ENCODE measurements at regions of chr3 and their contacts with region 1.

Region 1: GRCh38 chr3:58299839-58300516 is 6.1 kb upstream of the RPP14 start:
- DNase-seq: peak in 1 of 2 experiments; percentile 39
- H3K4me3 ChIP-seq: no peak overlapping the region
- H3K27ac ChIP-seq: no peak overlapping the region
- H3K4me1 ChIP-seq: no peaks in the 10 kb centered on the region
- H3K27me3 ChIP-seq: no peaks in the 10 kb centered on the region
- CTCF ChIP-seq: peak; percentile 76

Region 2: GRCh38 chr3:57864853-57865252 is 435.1 kb before region 1 on chr3:
- CTCF ChIA-PET with region 1: no interaction called
- POLR2A ChIA-PET with region 1: no interaction called
- intact Hi-C with region 1: loop called (anchors 5 kb)
- DNase-seq: no peak
- H3K4me3 ChIP-seq: no peak overlapping the region
- H3K27ac ChIP-seq: 0 out of 2 replicates have a peak overlapping the region, but pooled peaks have one; percentile 9
- H3K4me1 ChIP-seq: no peaks in the 10 kb centered on the region
- H3K27me3 ChIP-seq: no peaks in the 10 kb centered on the region
- CTCF ChIP-seq: peak; percentile 64

Region 3: DNA sequence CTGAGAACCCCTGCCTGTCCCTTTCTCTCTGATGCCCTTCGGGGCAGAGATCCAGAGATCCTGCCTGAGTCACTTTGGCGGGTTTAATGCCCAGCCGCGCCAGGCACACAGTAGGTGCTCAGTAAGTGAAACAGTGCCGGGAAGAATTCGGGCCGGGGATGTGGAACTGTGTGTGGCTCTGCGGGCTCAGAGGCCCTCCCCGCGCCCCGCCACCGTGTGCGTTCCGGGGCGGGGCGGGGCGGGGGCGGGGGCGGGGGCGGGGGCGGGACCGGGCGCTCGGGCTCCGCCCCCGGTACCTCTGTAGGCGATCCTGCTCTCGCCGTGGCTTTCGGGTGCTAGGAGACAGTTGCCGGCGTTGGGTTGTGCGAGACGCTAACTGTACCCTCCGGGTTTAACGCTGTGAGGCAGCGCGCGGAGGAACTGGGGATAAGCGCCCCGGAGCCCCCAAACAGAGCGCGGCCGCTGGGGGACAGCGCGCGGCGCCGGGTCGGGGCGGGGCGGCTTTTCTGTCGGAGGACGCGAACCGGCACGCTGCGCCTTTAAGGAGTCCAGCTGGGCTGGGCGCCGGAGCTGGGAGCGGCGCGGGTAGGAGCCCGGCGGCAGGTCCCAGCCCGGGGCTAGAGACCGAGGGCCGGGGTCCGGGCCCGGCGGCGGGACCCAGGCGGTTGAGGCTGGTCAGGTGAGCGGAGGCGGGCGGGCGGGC is 62.6 kb before region 1 on chr3 and contains the start of gene ABHD6:
- CTCF ChIA-PET with region 1: no interaction called
- POLR2A ChIA-PET with region 1: no interaction called
- intact Hi-C with region 1: loop called (anchors 5 kb)
- DNase-seq: peak; percentile 39 to 77
- H3K4me3 ChIP-seq: peak within 1 kb of the TSS; percentile 67
- H3K27ac ChIP-seq: no peak within 1 kb of the TSS
- H3K4me1 ChIP-seq: peaks cover 27% of the 10 kb centered on the region
- H3K27me3 ChIP-seq: no peaks in the 10 kb centered on the region
- CTCF ChIP-seq: no peak
- total RNA-seq, gene ABHD6: 6.5 and 6.7 TPM in 2 replicates

Region 4: DNA sequence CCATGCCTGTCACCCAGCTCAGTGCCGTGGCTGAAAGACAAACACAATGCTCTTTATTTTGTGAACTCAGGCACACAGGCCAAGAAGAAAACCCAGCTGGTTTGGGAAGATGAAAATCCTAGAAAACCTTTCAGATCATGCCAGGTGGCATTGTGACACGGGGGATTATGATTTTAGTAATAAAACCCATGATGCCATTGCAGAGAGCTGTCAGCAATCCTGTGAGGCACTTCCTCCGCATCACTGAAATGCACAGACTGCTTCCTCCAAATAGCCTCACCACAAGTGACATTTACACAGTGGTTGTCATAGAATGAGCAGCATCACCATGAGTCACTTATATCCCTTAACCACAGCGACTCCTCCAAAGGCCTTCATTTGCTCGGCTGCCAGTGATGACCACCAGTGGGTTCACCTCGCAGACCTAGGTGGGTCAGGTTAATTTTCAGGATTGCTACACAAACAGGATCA is 39.7 kb before region 1 on chr3:
- CTCF ChIA-PET with region 1: no interaction called
- POLR2A ChIA-PET with region 1: no interaction called
- intact Hi-C with region 1: no loop called
- DNase-seq: peak; percentile 27 to 79
- H3K4me3 ChIP-seq: no peak overlapping the region
- H3K27ac ChIP-seq: peak overlapping the region; percentile 11; the same call in 1 of the 2 replicates
- H3K4me1 ChIP-seq: peaks cover 13% of the 10 kb centered on the region
- H3K27me3 ChIP-seq: no peaks in the 10 kb centered on the region
- CTCF ChIP-seq: no peak